Right cardiac atrium (tissue), 5 donors: ENCODE measurements at regions of chr3 and their contacts with region 1.

Region 1: DNA sequence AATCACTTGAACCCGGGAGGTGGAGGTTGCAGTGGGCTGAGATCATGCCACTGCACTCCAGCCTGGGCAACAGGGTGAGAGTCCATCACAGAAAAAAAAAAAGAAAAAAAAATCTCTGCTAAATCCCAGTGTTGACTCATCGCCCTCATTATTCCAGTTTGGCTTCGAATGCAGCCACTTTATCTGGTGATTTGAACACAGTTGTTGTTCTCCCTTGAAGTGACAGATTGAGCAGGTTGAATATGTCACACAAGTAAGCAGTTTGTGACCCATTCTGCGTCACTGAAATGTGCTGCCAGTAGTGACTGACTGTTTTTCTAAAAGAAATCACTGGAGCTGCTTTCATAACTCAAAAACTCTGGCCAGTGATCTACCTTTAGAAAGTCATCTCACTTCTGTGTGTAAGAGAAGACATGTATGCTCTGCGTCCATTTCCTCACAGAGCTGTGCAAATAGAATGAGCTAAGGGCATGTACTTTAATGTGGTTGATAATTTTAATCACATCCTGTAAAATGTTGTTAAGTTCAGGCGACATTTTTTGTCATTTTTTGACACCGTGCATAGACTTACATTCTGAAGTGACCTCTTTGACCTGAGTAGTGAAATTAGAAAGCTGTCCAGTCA is 12.5 kb downstream of the DOCK3 start:
- DNase-seq: peak in 1 of 3 donors; percentile 20
- ATAC-seq: peak; percentile 60 to 78
- H3K4me3 ChIP-seq: no peak overlapping the region
- H3K27ac ChIP-seq: no peak overlapping the region
- H3K4me1 ChIP-seq: peaks cover 3% of the 10 kb centered on the region
- H3K27me3 ChIP-seq: no peaks in the 10 kb centered on the region

Region 2: GRCh38 chr3:50873376-50874157 is 186.3 kb after region 1 on chr3:
- intact Hi-C with region 1: loop called in 1 of 4 experiments (anchors 10 kb)
- DNase-seq: no peak
- ATAC-seq: no peak
- H3K4me3 ChIP-seq: no peak overlapping the region
- H3K27ac ChIP-seq: no peak overlapping the region
- H3K4me1 ChIP-seq: no peaks in the 10 kb centered on the region
- H3K27me3 ChIP-seq: no peaks in the 10 kb centered on the region